Left colon (tissue), 2 donors: ENCODE measurements at regions of chr7 and their contacts with region 1.

Region 1: DNA sequence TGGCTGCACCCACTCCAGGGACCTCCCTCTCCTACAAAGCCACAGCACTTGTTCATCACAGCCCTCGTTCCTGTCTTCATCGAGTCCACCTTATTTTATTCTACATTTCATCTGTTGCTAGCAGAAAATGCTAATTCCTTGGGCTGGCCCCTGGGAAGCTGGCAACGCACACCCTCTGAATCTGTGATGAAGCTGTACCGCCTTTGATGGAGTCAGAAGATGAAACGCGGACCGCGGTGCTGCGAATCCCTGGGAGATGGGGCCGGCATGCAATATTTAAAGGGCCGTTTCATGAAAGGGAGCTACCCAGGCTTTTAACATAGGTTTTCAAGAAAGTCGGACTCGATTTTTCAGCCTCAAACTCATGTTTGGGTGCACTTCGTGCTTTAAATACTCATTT is 88.5 kb downstream of the NPTX2 start:
- DNase-seq: no peak
- ATAC-seq: no peak

Region 2: DNA sequence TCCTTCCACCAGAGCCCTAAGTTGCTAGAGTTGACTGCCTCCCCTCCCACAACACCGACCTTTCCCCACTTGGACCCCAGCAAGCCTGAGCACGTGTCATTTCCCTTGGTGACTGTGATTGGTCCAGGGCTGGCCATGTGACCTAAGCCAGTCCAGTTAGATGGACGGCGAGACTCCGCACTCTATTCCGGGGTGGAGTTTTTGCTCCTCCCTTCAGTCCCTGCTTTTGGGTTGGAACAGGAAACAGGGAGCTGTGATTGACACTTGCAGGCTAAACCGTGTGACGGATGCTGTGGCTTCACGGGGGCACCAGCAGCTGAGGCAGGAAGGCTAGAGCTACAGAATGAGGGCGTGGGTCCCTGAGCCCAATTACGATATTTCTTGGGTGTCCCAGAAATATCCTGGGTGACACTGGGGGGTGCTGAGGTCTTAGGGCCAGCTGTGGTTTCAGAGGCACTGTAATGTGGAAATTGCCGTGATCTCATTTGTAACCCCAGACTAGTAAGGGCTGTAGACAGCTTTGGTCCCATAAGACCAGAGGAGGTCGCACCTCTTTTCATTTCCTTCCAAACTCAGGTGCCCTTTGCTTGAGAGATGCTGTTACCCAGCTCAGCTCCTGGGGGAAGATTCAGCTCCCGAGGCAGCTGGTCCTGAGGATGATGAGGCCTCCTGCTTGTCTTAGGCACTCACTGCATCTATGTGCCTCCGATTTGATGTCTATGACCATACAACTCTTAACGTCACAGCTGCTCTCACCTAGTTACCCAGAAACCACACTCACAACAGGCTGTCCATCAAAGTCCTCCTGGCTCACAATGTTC is 191.2 kb before region 1 on chr7:
- intact Hi-C with region 1: loop called in 1 of 2 experiments (anchors 5 kb)
- DNase-seq: no peak
- ATAC-seq: no peak